CD4-positive, alpha-beta memory T cell (primary cell): ENCODE measurements at regions of chr11 and their contacts with region 1.

Region 1: DNA sequence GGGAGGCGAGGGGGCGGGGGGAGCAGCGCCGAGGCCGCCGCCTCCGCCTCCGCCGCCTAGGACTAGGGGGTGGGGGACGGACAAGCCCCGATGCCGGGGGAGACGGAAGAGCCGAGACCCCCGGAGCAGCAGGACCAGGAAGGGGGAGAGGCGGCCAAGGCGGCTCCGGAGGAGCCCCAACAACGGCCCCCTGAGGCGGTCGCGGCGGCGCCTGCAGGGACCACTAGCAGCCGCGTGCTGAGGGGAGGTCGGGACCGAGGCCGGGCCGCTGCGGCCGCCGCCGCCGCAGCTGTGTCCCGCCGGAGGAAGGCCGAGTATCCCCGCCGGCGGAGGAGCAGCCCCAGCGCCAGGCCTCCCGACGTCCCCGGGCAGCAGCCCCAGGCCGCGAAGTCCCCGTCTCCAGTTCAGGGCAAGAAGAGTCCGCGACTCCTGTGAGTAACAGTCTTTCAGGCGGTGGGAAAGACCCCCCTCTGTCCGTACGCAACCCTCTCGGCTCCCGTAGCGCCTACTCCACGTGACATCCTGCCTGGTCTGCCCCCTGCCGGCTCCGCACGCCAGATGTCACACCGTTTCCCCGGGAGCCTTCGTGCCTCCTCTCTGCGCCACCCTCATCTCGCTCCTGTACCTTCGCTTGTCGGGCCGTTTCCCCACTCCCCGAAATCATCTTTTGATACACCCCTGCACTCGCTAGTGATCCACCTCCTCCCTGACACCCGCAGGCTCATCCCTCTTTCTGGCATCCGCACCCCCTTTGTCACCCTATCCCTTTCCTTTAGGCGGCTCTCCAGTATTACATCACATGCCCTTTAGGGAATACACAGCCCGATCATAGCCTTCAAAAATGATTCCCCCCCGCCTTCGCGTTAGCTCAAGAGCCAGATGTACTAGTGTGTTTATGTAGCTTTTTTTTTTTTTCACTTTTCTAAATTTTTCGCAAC is 598 bp downstream of the ZFP91 start:
- DNase-seq: peak; percentile 89 to 94 (median 90)
- H3K4me3 ChIP-seq: peak overlapping the region; percentile 63 to 81
- H3K4me3 Mint-ChIP-seq: peak overlapping the region; percentile 93 to 99 (median 98)
- H3K27ac ChIP-seq: peak overlapping the region; percentile 99
- H3K27ac Mint-ChIP-seq: peak overlapping the region; percentile 98 to 100 (median 100)
- H3K4me1 ChIP-seq: peaks cover 70% of the 10 kb centered on the region
- H3K4me1 Mint-ChIP-seq: peaks cover 37 to 86% (median 58%) of the 10 kb centered on the region in 4 donors
- H3K27me3 ChIP-seq: no peaks in the 10 kb centered on the region
- H3K27me3 Mint-ChIP-seq: peaks cover 0 to 3% of the 10 kb centered on the region in 2 donors

Region 2: DNA sequence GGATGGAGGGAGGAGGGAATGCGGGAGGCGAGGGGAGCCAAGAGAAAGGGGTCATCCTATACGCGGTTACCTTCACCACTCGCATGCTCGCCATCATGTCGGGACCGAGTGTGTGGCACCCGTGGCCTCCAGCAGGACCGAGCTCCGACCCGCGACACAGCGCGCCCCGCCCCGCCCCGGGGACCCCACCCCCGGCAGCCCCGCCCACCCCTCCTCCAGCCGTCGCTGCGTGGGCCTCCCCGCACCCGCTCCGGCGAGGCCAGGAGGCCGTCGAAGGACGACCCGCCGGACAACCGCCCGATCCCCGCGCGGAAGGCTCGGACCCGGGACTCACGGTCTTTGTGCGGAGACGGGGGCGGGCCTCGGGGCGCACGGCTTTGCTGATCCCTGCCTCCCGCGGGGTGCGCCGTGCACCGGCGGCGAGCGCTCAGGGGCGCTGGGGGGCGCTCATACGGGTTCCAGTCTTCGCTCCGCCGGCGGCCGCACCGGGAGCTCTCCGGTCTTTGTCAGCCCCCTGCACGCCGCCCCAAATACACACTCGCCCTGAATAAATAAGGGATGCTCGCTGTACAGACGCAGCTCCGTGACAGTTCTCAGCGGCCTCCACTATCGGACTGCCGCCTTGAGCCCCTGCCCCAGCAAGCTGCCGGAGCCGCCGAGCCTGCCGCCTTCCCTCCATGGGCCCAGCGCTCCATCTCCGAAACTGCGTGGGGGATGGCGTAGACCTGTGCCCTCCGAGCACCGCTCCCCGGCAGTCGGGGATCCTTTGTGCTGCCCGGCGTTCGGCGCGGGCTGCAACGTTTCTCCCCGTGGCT is 1011.7 kb before region 1 on chr11 and contains the start of gene UBE2L6:
- CTCF ChIA-PET with region 1: interaction called, 4 read pairs
- POLR2A ChIA-PET with region 1: interaction called, 4 read pairs
- intact Hi-C with region 1: loop called (anchors 5 kb)
- DNase-seq: peak; percentile 59 to 86 (median 66)
- H3K4me3 ChIP-seq: peak within 1 kb of the TSS; percentile 72 to 81
- H3K4me3 Mint-ChIP-seq: peak within 1 kb of the TSS; percentile 94 to 100 (median 99)
- H3K27ac ChIP-seq: peak within 1 kb of the TSS; percentile 93
- H3K27ac Mint-ChIP-seq: peak within 1 kb of the TSS; percentile 97 to 99 (median 98)
- H3K4me1 ChIP-seq: peaks cover 34% of the 10 kb centered on the region
- H3K4me1 Mint-ChIP-seq: peaks cover 27 to 65% (median 42%) of the 10 kb centered on the region in 4 donors
- H3K27me3 ChIP-seq: no peaks in the 10 kb centered on the region
- H3K27me3 Mint-ChIP-seq: no peaks in the 10 kb centered on the region
- total RNA-seq, gene UBE2L6: 79.7 to 82.9 TPM

Region 3: GRCh38 chr11:57741132-57742086 is 838.1 kb before region 1 on chr11 and contains the start of gene SELENOH:
- CTCF ChIA-PET with region 1: no interaction called
- POLR2A ChIA-PET with region 1: interaction called, 7 read pairs
- intact Hi-C with region 1: loop called (anchors 1 kb)
- DNase-seq: peak; percentile 90 to 96 (median 91)
- H3K4me3 ChIP-seq: peak within 1 kb of the TSS; percentile 77 to 80
- H3K4me3 Mint-ChIP-seq: peak within 1 kb of the TSS; percentile 90 to 100 (median 98)
- H3K27ac ChIP-seq: peak within 1 kb of the TSS; percentile 82
- H3K27ac Mint-ChIP-seq: peak within 1 kb of the TSS; percentile 96 to 100 (median 99)
- H3K4me1 ChIP-seq: peaks cover 26% of the 10 kb centered on the region
- H3K4me1 Mint-ChIP-seq: peaks cover 18 to 36% (median 28%) of the 10 kb centered on the region in 4 donors
- H3K27me3 ChIP-seq: no peaks in the 10 kb centered on the region
- H3K27me3 Mint-ChIP-seq: no peaks in the 10 kb centered on the region
- total RNA-seq, gene SELENOH: 102 to 113 TPM

Region 4: GRCh38 chr11:58567889-58568512 is 11.5 kb before region 1 on chr11:
- CTCF ChIA-PET with region 1: interaction called, 187 read pairs
- POLR2A ChIA-PET with region 1: interaction called, 109 read pairs
- intact Hi-C with region 1: loop called (anchors 1 kb)
- DNase-seq: peak; percentile 72 to 79 (median 76)
- H3K4me3 ChIP-seq: no peak overlapping the region
- H3K4me3 Mint-ChIP-seq: peak overlapping the region; percentile 7 to 84 (median 66)
- H3K27ac ChIP-seq: no peak overlapping the region
- H3K27ac Mint-ChIP-seq: peak overlapping the region; percentile 64 to 93 (median 81)
- H3K4me1 ChIP-seq: peaks cover 76% of the 10 kb centered on the region
- H3K4me1 Mint-ChIP-seq: peaks cover 41 to 63% (median 52%) of the 10 kb centered on the region in 4 donors
- H3K27me3 ChIP-seq: no peaks in the 10 kb centered on the region
- H3K27me3 Mint-ChIP-seq: no peaks in the 10 kb centered on the region

Region 5: GRCh38 chr11:58675334-58676155 is 96.1 kb after region 1 on chr11:
- CTCF ChIA-PET with region 1: interaction called, 4 read pairs
- POLR2A ChIA-PET with region 1: no interaction called
- intact Hi-C with region 1: loop called (anchors 1 kb)
- DNase-seq: peak; percentile 46 to 64 (median 58)
- H3K4me3 ChIP-seq: no peak overlapping the region
- H3K4me3 Mint-ChIP-seq: no peak overlapping the region
- H3K27ac ChIP-seq: no peak overlapping the region
- H3K27ac Mint-ChIP-seq: no peak overlapping the region
- H3K4me1 ChIP-seq: no peaks in the 10 kb centered on the region
- H3K4me1 Mint-ChIP-seq: no peaks in the 10 kb centered on the region
- H3K27me3 ChIP-seq: peaks cover 5% of the 10 kb centered on the region
- H3K27me3 Mint-ChIP-seq: peaks cover 0 to 4% of the 10 kb centered on the region in 2 donors

Region 6: GRCh38 chr11:59550368-59550841 is 970.9 kb after region 1 on chr11:
- CTCF ChIA-PET with region 1: no interaction called
- POLR2A ChIA-PET with region 1: no interaction called
- intact Hi-C with region 1: loop called (anchors 2 kb)
- DNase-seq: peak; percentile 86 to 94 (median 87)
- H3K4me3 ChIP-seq: peak overlapping the region; percentile 19 to 61
- H3K4me3 Mint-ChIP-seq: peak overlapping the region; percentile 86 to 96 (median 88)
- H3K27ac ChIP-seq: peak overlapping the region; percentile 51
- H3K27ac Mint-ChIP-seq: peak overlapping the region; percentile 92 to 100 (median 94)
- H3K4me1 ChIP-seq: peaks cover 14% of the 10 kb centered on the region
- H3K4me1 Mint-ChIP-seq: peaks cover 16 to 52% (median 26%) of the 10 kb centered on the region in 4 donors
- H3K27me3 ChIP-seq: no peaks in the 10 kb centered on the region
- H3K27me3 Mint-ChIP-seq: peaks cover 0 to 9% of the 10 kb centered on the region in 2 donors